ENCODE measurements at regions of chr16 and their contacts with region 1.

Region 1: DNA sequence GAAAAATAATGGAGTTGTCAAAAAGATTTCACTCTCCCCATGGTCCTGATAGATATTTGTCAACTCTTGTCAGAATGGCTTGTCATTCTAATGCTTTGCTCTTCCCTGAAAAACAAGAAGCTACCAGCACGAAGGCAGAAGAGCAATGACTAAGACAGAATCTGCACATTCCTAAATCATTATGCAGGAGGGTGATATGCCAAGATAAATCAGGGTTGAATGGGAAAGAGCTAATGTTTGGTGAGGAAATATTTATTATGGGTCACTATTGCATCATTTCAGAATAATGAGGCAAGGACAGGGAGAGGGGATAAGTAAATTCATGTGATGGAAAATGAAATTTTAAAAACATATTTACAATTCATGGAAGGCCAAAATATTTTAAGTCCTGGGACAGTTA is 297.5 kb upstream of the XYLT1 start:
- DNase-seq: peak; percentile 71
- H3K4me3 Mint-ChIP-seq: no peak overlapping the region
- H3K27ac Mint-ChIP-seq: no peak overlapping the region
- H3K4me1 Mint-ChIP-seq: peaks cover 12% of the 10 kb centered on the region
- H3K27me3 Mint-ChIP-seq: no peaks in the 10 kb centered on the region
- CTCF ChIP-seq: no peak

Region 2: DNA sequence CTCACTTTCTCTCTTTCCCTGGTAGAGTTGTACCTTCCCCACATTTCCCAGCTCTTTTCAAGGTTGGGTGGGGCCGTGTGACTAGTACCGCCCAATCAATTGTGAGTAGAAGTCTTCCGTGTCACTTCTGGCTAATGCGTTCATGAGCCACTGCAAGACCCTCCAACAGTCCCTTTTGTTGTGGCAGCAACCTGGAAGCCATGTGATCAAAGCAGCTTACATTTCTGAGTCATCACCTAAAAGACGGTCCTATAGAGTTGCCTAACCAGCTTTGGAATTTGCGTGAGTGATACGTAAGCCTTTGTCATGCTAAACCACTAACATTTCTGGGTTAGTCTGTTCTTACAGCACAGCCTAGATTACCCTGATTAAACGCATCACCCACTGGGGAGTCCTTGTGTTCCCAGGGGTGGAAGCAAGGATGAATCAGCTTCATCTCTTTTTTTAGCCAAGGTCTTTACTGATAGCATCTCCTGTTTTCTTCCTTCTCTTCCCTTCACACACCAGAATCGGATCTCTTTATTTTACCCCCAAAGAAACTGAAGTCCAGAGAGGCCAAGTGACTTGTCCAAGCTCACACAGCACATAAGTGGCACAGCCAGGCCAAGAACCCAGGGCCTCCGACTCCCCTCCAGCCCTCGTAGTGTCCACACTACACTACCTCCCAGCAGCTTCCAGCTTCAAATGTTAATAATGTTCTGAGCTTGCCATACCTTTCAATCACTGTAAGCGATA is 68.8 kb after region 1 on chr16:
- CTCF ChIA-PET with region 1: no interaction called
- POLR2A ChIA-PET with region 1: no interaction called
- intact Hi-C with region 1: loop called (anchors 5 kb)
- DNase-seq: peak; percentile 87
- H3K4me3 Mint-ChIP-seq: no peak overlapping the region
- H3K27ac Mint-ChIP-seq: no peak overlapping the region
- H3K4me1 Mint-ChIP-seq: no peaks in the 10 kb centered on the region
- H3K27me3 Mint-ChIP-seq: no peaks in the 10 kb centered on the region
- CTCF ChIP-seq: no peak

Measured in MCF 10A (cell line).